ENCODE measurements at regions of chr14 and their contacts with region 1.

Region 1: DNA sequence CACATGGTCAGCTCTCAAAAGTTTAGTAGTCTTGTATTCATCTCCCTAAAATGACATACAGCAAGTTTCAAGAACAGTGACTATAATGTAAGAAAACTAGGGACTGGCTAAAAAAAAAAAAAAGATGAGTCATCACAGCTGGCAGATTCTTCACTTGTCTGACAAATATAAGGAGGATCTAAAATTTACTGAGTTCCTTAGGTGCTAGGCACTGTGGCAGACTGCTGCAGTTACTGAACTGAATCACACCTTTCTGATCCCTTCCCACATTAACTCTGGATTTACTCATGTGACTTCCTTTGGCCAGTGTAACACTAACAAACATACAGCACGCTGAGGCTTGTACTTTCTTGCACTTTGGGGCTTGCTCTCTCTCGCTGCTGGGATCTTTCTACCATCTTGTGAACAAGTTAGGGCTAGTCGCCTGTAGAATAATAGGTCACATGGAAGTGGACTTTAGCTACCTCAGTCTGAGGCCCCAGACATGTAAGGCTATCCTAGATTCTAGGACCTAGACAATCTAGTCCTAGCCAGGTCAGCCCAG is 32.1 kb downstream of the BAZ1A start:
- DNase-seq: no peak
- H3K4me3 ChIP-seq: no peak overlapping the region
- H3K27ac ChIP-seq: peak overlapping the region in 6 of 8 donors; percentile 20 to 82 (median 62)
- H3K4me1 ChIP-seq: peaks cover 0 to 41% (median 15%) of the 10 kb centered on the region in 6 donors
- H3K27me3 ChIP-seq: no peaks in the 10 kb centered on the region
- CTCF ChIP-seq: no peak
- POLR2A ChIP-seq: no peak

Region 2: GRCh38 chr14:34797747-34798583 is 45.1 kb before region 1 on chr14:
- intact Hi-C with region 1: loop called (anchors 10 kb)
- DNase-seq: no peak
- H3K4me3 ChIP-seq: no peak overlapping the region
- H3K27ac ChIP-seq: no peak overlapping the region
- H3K4me1 ChIP-seq: peaks cover 0 to 4% (median 0%) of the 10 kb centered on the region in 6 donors
- H3K27me3 ChIP-seq: no peaks in the 10 kb centered on the region
- CTCF ChIP-seq: no peak
- POLR2A ChIP-seq: no peak